ENCODE measurements at regions of chrX and their contacts with region 1.

Region 1: GRCh38 chrX:53321230-53321942 is 40.0 kb upstream of the IQSEC2 start:
- DNase-seq: no peak
- H3K4me3 ChIP-seq: peak overlapping the region; percentile 41 to 48
- H3K27ac ChIP-seq: peak overlapping the region; percentile 33 to 38
- H3K4me1 ChIP-seq: no peaks in the 10 kb centered on the region
- H3K27me3 ChIP-seq: no peaks in the 10 kb centered on the region
- CTCF ChIP-seq: no peak
- POLR2A ChIP-seq: peak; percentile 44

Region 2: DNA sequence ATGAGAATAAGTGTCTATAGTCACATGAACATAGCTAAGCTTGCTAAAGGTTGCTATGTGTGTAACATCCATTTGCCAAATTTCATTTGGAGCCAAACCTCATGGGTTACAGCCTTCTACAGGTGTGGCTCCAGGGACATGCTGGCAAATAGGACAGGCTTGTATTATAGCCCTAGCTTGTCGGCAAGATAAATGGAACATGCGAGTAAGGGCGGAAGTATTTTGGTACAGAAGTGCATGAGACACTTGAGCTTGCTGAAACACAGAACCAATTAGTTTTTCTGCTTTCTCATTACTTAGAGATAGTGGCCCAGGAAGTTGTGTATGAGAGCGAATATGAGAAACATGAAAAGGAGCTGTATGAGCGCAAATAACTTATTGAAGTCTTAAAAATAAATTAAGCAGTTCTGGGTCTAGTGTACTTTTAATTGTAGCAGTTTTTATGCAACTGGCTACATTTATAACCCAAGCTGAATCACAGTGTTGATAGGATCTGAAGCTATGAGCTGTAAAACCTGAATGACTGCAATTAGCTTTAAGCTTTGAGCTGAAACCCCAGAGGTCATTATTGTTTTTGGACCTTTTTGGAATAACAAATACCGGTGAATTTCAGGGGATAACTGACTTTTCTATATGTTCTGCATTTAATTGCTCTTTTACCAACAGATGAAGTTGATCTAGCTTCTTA is 160.9 kb before region 1 on chrX:
- intact Hi-C with region 1: no loop called
- DNase-seq: peak; percentile 5
- H3K4me3 ChIP-seq: no peak overlapping the region
- H3K27ac ChIP-seq: no peak overlapping the region
- H3K4me1 ChIP-seq: no peaks in the 10 kb centered on the region
- H3K27me3 ChIP-seq: no peaks in the 10 kb centered on the region
- CTCF ChIP-seq: no peak
- POLR2A ChIP-seq: no peak

Region 3: DNA sequence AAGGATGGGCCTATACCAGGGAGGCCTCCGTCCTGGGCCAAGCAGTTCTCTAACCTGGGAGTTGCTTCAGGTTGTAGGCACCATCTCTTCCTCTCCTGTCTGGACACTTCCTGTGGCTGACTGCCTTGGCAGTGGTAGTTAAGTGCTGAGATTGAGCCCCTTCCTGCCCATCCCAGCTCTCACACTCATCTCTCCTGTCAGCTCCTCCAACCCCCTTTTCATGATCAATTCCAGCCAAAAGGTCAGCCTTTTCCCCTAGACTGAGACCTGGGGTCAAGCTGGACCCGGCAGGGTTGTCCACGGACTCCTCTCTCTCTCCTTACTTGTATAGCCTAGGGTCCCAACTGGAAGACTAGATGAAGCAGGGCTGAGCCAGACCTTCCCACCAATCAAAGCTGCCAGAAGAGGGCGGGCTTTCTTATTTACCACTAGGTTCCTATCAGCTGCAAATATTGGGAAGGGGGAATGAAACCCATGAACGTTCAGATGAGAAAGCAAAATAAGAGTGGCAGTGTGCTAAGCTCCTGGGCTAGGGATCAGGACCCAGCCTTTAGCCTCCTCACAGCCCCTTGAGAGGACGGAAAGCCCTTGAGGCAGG is 130.9 kb before region 1 on chrX:
- intact Hi-C with region 1: no loop called
- DNase-seq: no peak
- H3K4me3 ChIP-seq: no peak overlapping the region
- H3K27ac ChIP-seq: no peak overlapping the region
- H3K4me1 ChIP-seq: no peaks in the 10 kb centered on the region
- H3K27me3 ChIP-seq: no peaks in the 10 kb centered on the region
- CTCF ChIP-seq: no peak
- POLR2A ChIP-seq: no peak

Region 4: DNA sequence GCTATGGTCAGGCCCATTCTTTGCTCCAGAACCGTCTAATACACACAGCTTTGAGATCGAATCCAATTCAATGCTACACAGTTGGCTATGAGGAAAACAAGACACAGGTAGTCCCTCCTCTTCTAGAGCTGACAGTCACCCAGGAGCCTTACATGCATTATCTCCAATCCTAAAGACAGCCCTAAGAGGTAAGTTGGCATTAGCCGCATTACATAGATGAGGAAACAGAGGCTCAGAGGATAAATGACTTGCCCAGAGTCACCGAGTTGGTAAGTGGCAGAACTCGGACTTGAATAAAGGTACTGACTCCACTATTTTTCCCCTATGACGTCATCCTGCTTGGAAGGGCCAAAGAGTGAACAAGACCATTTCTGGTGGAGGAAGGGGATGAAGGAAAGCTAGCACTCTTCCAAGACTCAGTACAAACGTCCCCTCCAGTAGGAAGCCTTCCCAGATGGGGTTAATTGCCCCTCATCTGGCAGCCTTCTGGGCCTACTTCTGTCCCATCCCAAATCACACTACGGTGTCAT is 48.5 kb before region 1 on chrX:
- intact Hi-C with region 1: no loop called
- DNase-seq: no peak
- H3K4me3 ChIP-seq: no peak overlapping the region
- H3K27ac ChIP-seq: no peak overlapping the region
- H3K4me1 ChIP-seq: no peaks in the 10 kb centered on the region
- H3K27me3 ChIP-seq: no peaks in the 10 kb centered on the region
- CTCF ChIP-seq: no peak
- POLR2A ChIP-seq: no peak

Region 5: DNA sequence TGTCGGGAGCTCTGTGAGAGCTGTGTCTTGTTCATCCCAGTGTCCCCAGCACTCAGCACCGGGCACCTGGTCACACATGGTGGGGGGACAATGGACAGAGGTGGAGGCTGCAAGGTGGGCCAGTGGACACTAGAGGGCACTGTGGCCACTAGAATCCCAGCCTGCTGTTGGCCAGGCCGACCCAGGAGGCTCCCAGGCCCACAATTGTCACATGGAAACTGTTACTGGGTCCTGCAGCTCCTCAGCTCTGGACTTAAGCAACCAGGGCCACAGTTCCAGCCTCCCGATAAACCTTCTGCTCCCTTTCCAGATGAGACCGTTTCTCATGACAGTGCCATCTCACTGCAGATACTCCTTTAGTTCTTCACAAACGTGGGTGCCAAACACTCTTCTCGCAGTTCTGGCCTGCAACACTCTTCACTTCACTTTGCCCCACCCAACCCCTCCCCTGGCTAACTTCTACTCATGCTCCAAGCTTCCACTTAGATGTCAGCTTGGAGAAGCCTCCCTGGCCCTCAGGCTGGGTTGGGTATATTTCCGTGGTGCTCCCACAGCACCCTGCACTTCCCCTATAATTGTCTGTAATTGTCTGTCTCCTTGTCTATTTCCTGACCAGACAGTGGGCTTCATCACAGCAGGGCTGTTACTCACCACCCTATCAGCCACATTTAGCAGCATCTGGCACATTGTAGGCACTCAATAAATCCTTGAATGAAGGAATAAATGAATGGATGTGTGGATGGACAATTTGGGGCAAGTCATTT is 36.5 kb before region 1 on chrX:
- intact Hi-C with region 1: loop called (anchors 5 kb)
- DNase-seq: peak; percentile 15
- H3K4me3 ChIP-seq: no peak overlapping the region
- H3K27ac ChIP-seq: no peak overlapping the region
- H3K4me1 ChIP-seq: peaks cover 4% of the 10 kb centered on the region
- H3K27me3 ChIP-seq: no peaks in the 10 kb centered on the region
- CTCF ChIP-seq: peak in 3 of 4 experiments; percentile 44 to 66 (median 56)
- POLR2A ChIP-seq: no peak

Measured in prostate gland (tissue), 2 donors.